ENCODE measurements at regions of chr3 and their contacts with region 1.

Region 1: GRCh38 chr3:136752422-136753325 is 496 bp upstream of the STAG1 start:
- DNase-seq: peak; percentile 98
- H3K4me3 ChIP-seq: peak overlapping the region; percentile 47 to 73 (median 52)
- H3K27ac ChIP-seq: peak overlapping the region; percentile 87
- H3K4me1 ChIP-seq: peaks cover 16% of the 10 kb centered on the region
- H3K27me3 ChIP-seq: no peaks in the 10 kb centered on the region
- CTCF ChIP-seq: peak in 1 of 2 donors; percentile 28

Region 2: GRCh38 chr3:136075218-136075808 is 677.4 kb before region 1 on chr3:
- CTCF ChIA-PET with region 1: interaction called, 8 read pairs
- dilution Hi-C with region 1: no loop called
- in situ Hi-C with region 1: loop called (anchors 5 to 10 kb)
- intact Hi-C with region 1: loop called (anchors 1 kb)
- DNase-seq: peak; percentile 53
- H3K4me3 ChIP-seq: no peak overlapping the region
- H3K27ac ChIP-seq: no peak overlapping the region
- H3K4me1 ChIP-seq: peaks cover 16% of the 10 kb centered on the region
- H3K27me3 ChIP-seq: no peaks in the 10 kb centered on the region
- CTCF ChIP-seq: peak; percentile 90 to 96

Region 3: GRCh38 chr3:136250226-136250902 is 502.3 kb before region 1 on chr3 and contains the start of gene PCCB:
- CTCF ChIA-PET with region 1: no interaction called
- dilution Hi-C with region 1: no loop called
- in situ Hi-C with region 1: no loop called
- intact Hi-C with region 1: loop called (anchors 1 kb)
- DNase-seq: peak; percentile 95
- H3K4me3 ChIP-seq: peak within 1 kb of the TSS; percentile 63 to 74 (median 71)
- H3K27ac ChIP-seq: peak within 1 kb of the TSS; percentile 39
- H3K4me1 ChIP-seq: peaks cover 13% of the 10 kb centered on the region
- H3K27me3 ChIP-seq: no peaks in the 10 kb centered on the region
- CTCF ChIP-seq: peak; percentile 40 to 89
- total RNA-seq, gene PCCB: 29.7 to 35.5 TPM

Region 4: DNA sequence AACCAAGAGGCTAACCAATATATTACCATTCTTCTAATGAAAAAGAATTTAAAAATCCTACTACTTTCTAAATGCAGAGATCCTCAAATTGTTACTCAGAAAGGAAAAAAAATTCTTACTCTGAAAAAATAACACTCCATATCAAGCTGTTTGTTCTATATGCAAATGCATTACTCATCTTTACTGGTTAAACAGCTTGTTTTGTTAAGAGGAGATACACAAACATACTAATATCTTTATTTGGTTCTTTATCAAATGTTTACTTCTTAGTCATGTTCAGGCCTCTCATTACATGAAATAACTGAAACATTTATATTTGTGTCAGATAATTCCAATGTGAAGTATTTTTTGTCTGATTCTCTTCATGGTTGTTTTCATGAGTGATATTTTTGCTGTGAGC is 355.8 kb before region 1 on chr3:
- CTCF ChIA-PET with region 1: interaction called, 27 read pairs
- dilution Hi-C with region 1: no loop called
- in situ Hi-C with region 1: loop called (anchors 25 kb)
- intact Hi-C with region 1: no loop called
- DNase-seq: no peak
- H3K4me3 ChIP-seq: no peak overlapping the region
- H3K27ac ChIP-seq: no peak overlapping the region
- H3K4me1 ChIP-seq: no peaks in the 10 kb centered on the region
- H3K27me3 ChIP-seq: no peaks in the 10 kb centered on the region
- CTCF ChIP-seq: no peak

Region 5: DNA sequence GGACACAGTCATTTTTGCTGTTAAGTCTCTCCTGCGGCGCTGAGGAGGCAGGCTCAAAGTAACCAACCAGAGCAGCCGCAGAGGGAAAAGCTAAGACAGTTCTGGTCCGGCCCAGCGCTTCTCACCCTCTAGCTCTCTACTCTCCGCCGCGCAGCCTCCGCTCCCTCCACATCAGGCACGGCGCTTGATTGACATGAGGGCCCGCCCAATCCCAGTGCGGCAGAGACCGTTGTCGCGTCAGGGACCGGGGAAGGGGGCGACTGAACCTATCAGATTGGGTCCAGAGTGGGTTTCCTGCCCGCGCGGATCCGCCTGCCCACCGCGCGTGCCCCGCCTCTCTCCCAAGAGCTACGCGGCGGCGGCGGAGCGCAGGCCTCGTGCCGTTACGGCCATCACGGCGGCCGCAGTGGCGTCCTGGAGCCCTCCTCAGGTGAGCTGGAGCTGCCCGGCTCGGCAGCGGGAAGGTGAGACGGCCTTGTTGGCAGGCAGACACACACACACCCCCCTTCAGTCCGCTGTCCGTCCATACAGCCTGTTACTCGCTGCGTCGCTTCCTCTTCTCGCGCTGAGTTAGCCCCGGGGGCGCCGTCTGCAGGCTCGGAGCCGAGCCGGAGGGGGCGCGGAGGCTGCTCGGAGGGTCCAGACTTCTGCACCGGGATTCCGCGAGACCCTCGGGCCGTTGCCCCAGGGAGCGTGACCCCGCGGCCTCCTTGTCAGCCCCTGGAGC is 109.4 kb after region 1 on chr3 and contains the start of gene NCK1:
- CTCF ChIA-PET with region 1: interaction called, 9 read pairs
- dilution Hi-C with region 1: no loop called
- in situ Hi-C with region 1: no loop called
- intact Hi-C with region 1: loop called (anchors 1 kb)
- DNase-seq: peak; percentile 99
- H3K4me3 ChIP-seq: peak within 1 kb of the TSS; percentile 63 to 88 (median 72)
- H3K27ac ChIP-seq: peak within 1 kb of the TSS; percentile 77
- H3K4me1 ChIP-seq: peaks cover 11% of the 10 kb centered on the region
- H3K27me3 ChIP-seq: no peaks in the 10 kb centered on the region
- CTCF ChIP-seq: peak in 1 of 2 donors; percentile 6
- total RNA-seq, gene NCK1: 46.2 to 47.0 TPM

Region 6: DNA sequence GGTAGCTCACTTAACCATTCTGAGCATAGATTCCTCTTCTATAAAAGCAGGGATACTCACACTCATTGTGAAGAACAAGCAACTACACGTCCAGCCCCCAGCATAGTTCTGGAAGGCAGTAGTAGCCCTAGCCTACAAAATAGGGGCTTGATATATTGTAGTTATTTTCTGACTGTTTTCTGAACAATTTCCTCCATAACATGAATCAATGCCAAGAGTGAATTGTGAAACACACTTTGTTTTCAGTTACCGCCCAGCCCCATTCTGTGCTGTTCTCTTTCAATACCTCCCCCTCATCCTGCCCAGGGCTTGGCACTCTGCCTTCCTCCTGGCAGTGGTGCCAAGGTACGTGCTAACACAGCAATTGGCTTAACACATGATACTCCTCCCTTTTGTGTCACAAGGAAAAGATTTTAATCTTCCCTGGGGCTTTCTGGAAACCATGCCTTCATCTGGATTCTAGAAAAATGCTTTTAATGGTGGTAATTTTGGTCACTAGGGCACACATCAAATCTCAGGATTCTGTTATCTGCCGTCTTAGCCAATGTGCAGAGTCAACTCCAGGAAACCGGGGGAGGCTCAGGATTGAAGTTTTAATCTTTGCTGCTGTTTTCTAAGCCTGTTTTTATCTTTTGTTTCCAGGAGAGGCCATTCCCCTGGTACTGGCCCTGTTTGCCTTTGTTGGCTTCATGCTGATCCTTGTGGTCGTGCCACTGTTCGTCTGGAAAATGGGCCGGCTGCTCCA is 242.3 kb after region 1 on chr3:
- CTCF ChIA-PET with region 1: no interaction called
- dilution Hi-C with region 1: loop called (anchors 5 kb)
- in situ Hi-C with region 1: no loop called
- intact Hi-C with region 1: no loop called
- DNase-seq: peak; percentile 98
- H3K4me3 ChIP-seq: no peak overlapping the region
- H3K27ac ChIP-seq: peak overlapping the region; percentile 91
- H3K4me1 ChIP-seq: peaks cover 55% of the 10 kb centered on the region
- H3K27me3 ChIP-seq: no peaks in the 10 kb centered on the region
- CTCF ChIP-seq: no peak

Region 7: DNA sequence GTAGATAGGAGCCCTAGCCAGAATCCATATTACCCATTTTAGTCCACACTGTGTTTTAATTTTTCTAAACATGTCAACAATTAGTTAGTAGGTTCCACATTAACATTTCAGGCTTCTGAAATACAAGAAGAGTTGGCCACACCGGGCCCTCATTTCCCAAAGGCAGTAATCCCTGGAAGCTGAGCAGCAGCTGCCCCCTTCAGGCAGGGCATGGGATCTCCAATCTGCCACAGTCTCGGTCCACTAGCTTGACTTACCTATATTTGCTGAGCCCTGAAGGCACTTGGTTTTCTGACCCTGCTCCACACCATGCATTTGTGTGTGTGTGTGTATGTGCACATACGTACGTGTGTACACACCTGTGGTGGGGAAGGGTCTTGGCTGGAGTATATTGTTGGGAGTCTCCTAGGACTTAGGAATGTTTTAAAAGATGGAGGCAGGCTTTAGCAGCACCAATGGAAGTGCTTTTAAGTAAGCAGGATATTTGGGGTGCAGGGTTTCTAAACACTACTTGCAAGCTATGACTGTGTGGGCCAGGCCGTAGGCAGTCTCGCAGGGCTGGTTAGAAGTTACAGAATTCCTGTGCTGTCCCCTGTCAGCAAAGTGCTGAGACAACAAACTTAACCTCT is 940.2 kb after region 1 on chr3:
- CTCF ChIA-PET with region 1: no interaction called
- dilution Hi-C with region 1: no loop called
- in situ Hi-C with region 1: no loop called
- intact Hi-C with region 1: loop called (anchors 10 kb)
- DNase-seq: peak; percentile 16
- H3K4me3 ChIP-seq: no peak overlapping the region
- H3K27ac ChIP-seq: no peak overlapping the region
- H3K4me1 ChIP-seq: no peaks in the 10 kb centered on the region
- H3K27me3 ChIP-seq: no peaks in the 10 kb centered on the region
- CTCF ChIP-seq: peak; percentile 71 to 82